Vagina (tissue), 2 donors: ENCODE measurements at regions of chr15 and their contacts with region 1.

Region 1: DNA sequence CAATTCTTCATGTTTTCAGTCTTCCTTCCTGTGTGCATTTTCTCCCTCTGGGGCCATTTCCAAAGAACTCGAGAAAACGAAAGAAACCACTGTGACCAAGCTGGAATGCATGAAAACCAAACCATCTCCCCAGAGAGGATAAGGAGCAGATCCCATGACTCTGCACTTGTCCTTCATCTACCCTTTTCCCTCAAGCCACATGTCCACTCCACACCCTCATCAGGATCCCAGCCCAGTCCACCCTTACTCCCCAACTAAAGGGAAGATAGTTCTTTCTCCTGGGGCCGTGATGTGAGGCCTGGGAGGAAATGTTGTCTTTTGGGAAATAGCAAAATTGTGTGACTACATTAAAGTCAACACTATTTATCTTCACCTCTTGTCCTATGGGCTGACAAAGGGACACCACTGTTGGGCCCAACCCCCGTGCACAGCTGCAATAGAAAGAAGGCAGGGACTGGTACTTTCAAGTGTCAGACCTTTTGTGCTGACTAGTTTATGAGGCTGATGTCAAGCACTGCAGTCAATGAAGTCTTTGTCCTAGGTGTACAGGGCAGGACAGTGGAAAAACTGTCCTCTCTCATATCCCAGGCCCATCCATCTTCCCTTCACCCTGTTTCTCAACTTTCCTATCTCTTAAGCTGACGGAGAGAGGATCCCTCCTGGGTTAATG is 487.1 kb upstream of the NR2F2 start:
- DNase-seq: no peak
- H3K4me3 ChIP-seq: no peak overlapping the region
- H3K27ac ChIP-seq: peak overlapping the region; percentile 31
- H3K4me1 ChIP-seq: peaks cover 18% of the 10 kb centered on the region
- H3K27me3 ChIP-seq: no peaks in the 10 kb centered on the region
- CTCF ChIP-seq: no peak
- POLR2A ChIP-seq: no peak

Region 2: DNA sequence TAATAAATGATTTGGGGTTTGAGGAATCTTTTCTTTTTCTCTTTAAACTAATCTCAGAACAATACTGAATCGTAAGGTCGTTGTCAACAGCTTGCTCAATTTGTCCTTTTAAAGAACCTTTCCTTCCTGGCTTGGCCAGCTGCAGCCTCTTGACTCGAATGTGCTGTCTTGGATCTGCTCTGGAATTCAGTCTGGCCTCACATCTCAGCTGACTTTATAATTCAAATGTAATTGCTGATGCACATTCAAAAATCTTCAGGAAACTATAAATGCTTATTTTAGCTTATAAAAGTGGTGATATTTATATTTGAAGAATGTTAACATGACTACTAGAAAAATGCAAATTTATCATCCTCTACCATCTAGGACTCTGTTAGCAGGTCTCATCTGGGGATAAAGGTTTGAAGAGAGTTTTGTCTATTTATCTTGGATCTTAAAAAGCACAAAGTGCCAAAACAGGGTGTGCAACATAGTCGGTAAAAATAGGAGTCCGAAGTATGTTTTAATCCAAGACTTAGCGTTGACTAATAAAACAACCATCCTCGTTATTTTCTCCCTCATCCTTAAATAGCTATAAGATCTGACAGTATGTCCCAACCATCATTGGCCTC is 576.8 kb before region 1 on chr15:
- intact Hi-C with region 1: loop called (anchors 5 kb)
- DNase-seq: no peak
- H3K4me3 ChIP-seq: no peak overlapping the region
- H3K27ac ChIP-seq: peak overlapping the region; percentile 64
- H3K4me1 ChIP-seq: peaks cover 52% of the 10 kb centered on the region
- H3K27me3 ChIP-seq: no peaks in the 10 kb centered on the region
- CTCF ChIP-seq: no peak
- POLR2A ChIP-seq: no peak

Region 3: GRCh38 chr15:95446854-95447253 is 396.5 kb before region 1 on chr15:
- intact Hi-C with region 1: loop called (anchors 10 kb)
- DNase-seq: no peak
- H3K4me3 ChIP-seq: no peak overlapping the region
- H3K27ac ChIP-seq: no peak overlapping the region
- H3K4me1 ChIP-seq: peaks cover 6% of the 10 kb centered on the region
- H3K27me3 ChIP-seq: no peaks in the 10 kb centered on the region
- CTCF ChIP-seq: no peak
- POLR2A ChIP-seq: no peak